Caco-2 (cell line): ENCODE measurements at regions of chr11 and their contacts with region 1.

Region 1: DNA sequence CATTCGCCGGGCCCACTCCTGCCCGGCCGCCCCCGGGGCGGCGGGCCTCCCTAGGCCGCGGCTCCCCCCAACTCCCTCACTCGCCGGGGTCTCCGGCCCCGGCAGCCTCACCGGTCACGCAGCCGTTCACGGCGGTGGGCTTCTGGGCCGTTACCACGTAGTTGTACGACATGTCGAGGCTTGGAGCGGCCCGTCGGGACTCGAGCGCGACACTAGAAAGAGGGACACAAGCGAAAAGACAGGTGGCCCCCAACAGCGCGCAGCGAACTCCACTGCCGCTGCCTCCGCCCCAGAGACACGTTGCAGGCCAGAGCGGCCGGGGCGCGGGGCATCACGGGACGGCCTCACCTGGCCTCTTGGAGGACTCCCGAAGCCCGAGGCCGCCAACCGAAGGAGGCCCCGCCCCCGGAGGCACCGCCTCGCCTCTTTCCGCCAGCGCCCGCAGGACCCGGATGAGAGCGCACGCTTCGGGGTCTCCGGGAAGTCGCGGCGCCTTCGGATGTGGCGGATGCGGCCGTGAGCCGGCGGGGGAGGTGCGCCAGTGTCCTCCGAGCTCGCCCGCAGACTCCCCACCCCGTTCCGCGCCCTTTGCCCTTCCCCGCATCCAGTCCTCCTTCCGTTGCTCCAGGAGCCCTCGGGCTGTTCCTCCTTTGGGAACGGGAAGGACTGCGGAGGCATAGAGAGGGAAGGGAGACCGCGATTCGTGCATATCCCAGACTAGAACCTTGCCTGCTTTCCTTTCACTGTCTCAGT is at the starts of genes DDB1 and TKFC:
- DNase-seq: peak; percentile 96 to 98
- H3K4me3 ChIP-seq: peak within 1 kb of the TSS; percentile 61
- H3K4me3 Mint-ChIP-seq: peak within 1 kb of the TSS; percentile 100
- H3K27ac Mint-ChIP-seq: peak within 1 kb of the TSS; percentile 98
- H3K4me1 ChIP-seq: peaks cover 13% of the 10 kb centered on the region
- H3K4me1 Mint-ChIP-seq: peaks cover 17% of the 10 kb centered on the region
- H3K27me3 ChIP-seq: no peaks in the 10 kb centered on the region
- H3K27me3 Mint-ChIP-seq: no peaks in the 10 kb centered on the region
- CTCF ChIP-seq: no peak
- total RNA-seq, gene DDB1: 284 and 303 TPM in 2 replicates
- total RNA-seq, gene TKFC: 86.2 and 99.0 TPM in 2 replicates

Region 2: DNA sequence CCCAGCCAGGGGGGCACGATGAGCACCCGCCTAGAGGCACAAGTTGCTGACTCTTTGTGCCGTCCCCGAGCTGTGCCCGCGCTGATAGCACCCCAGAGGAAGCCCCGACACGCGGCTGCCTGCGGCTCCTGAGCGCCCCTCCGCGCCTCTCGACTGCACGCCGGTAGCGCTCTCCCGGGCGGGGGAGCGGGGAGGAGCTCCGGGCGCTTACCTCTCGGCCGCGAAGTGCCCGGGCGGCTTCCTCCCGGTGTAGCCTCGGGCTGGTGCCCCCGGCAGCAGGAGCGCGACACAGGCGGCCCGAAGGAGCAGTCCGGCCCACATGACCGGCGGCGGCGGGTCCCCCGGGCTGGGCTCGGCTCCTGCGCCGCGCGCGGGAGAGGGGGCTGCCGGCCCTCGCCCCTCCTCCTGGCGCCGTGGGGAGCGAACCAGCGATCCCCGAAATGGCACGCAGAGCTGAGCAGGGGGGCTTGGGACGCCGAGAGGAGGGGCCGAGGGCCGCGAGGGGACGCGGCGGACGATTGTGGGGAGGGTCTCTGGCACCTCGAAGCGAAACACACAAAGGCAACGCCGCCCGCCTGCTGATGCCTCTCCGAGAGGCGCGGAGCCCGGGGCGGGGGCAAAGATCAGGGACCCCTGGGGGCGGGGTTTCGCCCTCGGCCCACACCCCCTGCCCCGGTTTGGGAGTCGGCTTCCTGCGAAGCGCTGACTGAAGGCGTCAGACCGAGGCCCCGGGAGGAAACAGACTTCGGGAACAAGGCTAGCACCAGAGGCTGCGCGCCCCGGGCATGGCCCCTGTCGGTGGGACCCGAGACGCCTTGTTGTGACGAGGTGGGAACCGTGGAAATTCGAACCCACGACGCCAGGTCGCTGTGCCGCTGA is 38.0 kb before region 1 on chr11 and contains the start of gene VWCE:
- CTCF ChIA-PET with region 1: interaction called, 6 read pairs
- POLR2A ChIA-PET with region 1: no interaction called
- intact Hi-C with region 1: loop called (anchors 2 kb)
- DNase-seq: peak; percentile 71 to 82
- H3K4me3 ChIP-seq: peak within 1 kb of the TSS; percentile 80
- H3K4me3 Mint-ChIP-seq: peak within 1 kb of the TSS; percentile 96
- H3K27ac Mint-ChIP-seq: peak within 1 kb of the TSS; percentile 88
- H3K4me1 ChIP-seq: peaks cover 32% of the 10 kb centered on the region
- H3K4me1 Mint-ChIP-seq: peaks cover 12% of the 10 kb centered on the region
- H3K27me3 ChIP-seq: no peaks in the 10 kb centered on the region
- H3K27me3 Mint-ChIP-seq: no peaks in the 10 kb centered on the region
- CTCF ChIP-seq: peak; percentile 19 to 41
- total RNA-seq, gene VWCE: 17.7 and 18.6 TPM in 2 replicates

Region 3: DNA sequence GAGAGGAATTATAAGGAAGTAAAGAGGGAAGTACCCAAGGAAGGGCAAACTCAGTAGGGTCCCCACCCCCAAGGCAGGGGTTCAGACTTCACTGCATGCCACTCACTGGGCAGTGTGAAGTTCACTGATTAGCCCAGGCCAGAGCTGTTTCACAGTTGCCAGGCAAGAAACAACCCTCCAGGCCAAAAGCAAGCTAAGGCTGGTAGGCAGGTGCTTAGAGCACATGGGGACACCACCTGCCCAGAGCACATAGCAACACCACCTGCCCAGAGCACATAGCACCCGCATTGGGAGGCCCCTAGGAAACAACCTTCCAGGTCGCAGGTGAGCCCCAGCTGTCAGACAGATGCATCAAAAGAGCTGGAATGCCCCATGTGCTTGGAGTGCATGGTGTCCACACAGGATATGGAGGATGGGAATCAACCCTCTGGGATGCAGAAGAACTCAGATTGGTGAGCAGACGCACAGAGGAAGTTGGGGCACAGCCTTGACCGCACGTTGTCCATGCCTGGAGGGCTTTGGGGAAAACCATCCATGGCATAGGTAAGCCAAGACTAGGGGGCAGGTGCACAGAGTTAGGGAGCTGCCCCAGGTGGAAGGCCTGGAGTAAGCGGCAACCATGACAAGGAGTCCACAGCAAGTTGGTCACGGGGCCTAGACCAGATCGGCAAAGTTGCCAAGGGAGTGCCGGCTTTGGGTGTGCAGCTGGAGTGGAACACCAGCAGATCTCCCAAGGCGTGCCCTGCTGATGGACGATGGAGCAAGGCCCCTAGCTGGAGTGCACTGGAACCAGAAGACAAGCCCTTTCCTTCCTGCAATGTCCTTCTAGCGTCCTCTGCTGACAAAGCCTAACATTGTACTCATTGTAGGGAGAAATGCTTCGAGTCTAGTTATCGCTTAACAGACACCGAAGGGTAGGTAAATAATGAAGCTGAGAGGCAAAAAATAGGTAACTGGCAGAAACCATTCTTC is 51.6 kb after region 1 on chr11:
- CTCF ChIA-PET with region 1: interaction called, 175 read pairs
- POLR2A ChIA-PET with region 1: interaction called, 8 read pairs
- intact Hi-C with region 1: loop called (anchors 1 kb)
- DNase-seq: peak in 1 of 2 experiments; percentile 47
- H3K4me3 ChIP-seq: no peak overlapping the region
- H3K4me3 Mint-ChIP-seq: no peak overlapping the region
- H3K27ac Mint-ChIP-seq: no peak overlapping the region
- H3K4me1 ChIP-seq: peaks cover 3% of the 10 kb centered on the region; the same call in 1 of the 2 replicates
- H3K4me1 Mint-ChIP-seq: peaks cover 5% of the 10 kb centered on the region
- H3K27me3 ChIP-seq: no peaks in the 10 kb centered on the region
- H3K27me3 Mint-ChIP-seq: no peaks in the 10 kb centered on the region
- CTCF ChIP-seq: peak in 1 of 2 experiments; percentile 44

Region 4: GRCh38 chr11:61392981-61393595 is 60.1 kb after region 1 on chr11:
- CTCF ChIA-PET with region 1: interaction called, 30 read pairs
- POLR2A ChIA-PET with region 1: interaction called, 4 read pairs
- intact Hi-C with region 1: loop called (anchors 2 kb)
- DNase-seq: peak; percentile 23 to 32
- H3K4me3 ChIP-seq: peak overlapping the region; percentile 94
- H3K4me3 Mint-ChIP-seq: peak overlapping the region; percentile 99
- H3K27ac Mint-ChIP-seq: peak overlapping the region; percentile 98
- H3K4me1 ChIP-seq: no peaks in the 10 kb centered on the region
- H3K4me1 Mint-ChIP-seq: no peaks in the 10 kb centered on the region
- H3K27me3 ChIP-seq: no peaks in the 10 kb centered on the region
- H3K27me3 Mint-ChIP-seq: no peaks in the 10 kb centered on the region
- CTCF ChIP-seq: peak in 1 of 2 experiments; percentile 32